Activated CD4-positive, alpha-beta memory T cell treated with anti-CD3 and anti-CD28 coated beads for 36 hours (primary cell): ENCODE measurements at regions of chr13 and their contacts with region 1.

Region 1: GRCh38 chr13:99448546-99448945 is 52.7 kb upstream of the TM9SF2 start:
- DNase-seq: no peak
- H3K4me3 Mint-ChIP-seq: no peak overlapping the region
- H3K27ac Mint-ChIP-seq: peak overlapping the region; percentile 42
- H3K4me1 Mint-ChIP-seq: peaks cover 30% of the 10 kb centered on the region
- H3K27me3 Mint-ChIP-seq: peaks cover 17% of the 10 kb centered on the region

Region 2: GRCh38 chr13:99464441-99464949 is 15.9 kb after region 1 on chr13:
- CTCF ChIA-PET with region 1: interaction called, 4 read pairs
- POLR2A ChIA-PET with region 1: interaction called, 4 read pairs
- intact Hi-C with region 1: loop called (anchors 1 kb)
- DNase-seq: peak; percentile 25
- H3K4me3 Mint-ChIP-seq: peak overlapping the region; percentile 42
- H3K27ac Mint-ChIP-seq: peak overlapping the region; percentile 86
- H3K4me1 Mint-ChIP-seq: peaks cover 30% of the 10 kb centered on the region
- H3K27me3 Mint-ChIP-seq: peaks cover 2% of the 10 kb centered on the region